Activated CD8-positive, alpha-beta memory T cell treated with anti-CD3 and anti-CD28 coated beads, Interleukin-2, amount 10 ng/mL, durations not matched to agents 7 days and 5 days (primary cell): ENCODE measurements at regions of chr6 and their contacts with region 1.

Region 1: DNA sequence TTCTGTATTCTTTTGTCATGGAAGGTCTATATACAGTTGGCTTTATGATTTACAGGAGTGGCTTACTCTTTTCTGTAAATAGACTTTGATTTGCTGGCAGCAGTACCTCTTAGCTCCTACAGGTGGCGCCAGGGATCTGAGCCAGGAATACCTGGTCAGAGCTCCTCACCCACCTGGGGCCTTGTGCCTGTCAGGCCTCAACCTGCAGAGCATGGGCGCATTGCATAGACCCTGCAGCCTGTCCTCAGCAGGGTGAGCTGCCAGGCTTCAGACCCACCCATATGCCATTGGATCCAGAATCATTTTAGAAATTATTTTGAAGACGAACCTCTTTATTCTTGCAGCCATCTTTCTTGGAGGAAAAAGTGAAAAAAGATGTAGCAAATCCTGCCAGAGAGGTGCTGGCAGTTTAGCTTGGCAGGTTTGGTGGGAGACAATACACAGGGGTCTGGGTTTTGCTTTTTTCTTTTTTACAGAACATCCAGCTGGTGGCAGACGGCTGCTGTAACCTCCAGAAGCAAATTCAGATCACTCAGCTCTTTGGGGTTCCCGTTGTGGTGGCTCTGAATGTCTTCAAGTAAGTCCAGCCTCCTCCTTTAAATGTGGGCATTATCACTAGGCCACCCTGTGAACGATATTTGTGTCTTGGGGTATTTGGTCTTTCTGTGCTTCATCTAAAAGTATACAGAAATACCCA is 149.1 kb downstream of the MTHFD1L start:
- DNase-seq: peak; percentile 72
- ATAC-seq: peak; percentile 69
- H3K4me3 Mint-ChIP-seq: no peak overlapping the region
- H3K27ac Mint-ChIP-seq: no peak overlapping the region
- H3K4me1 Mint-ChIP-seq: peaks cover 6% of the 10 kb centered on the region
- H3K27me3 Mint-ChIP-seq: no peaks in the 10 kb centered on the region

Region 2: GRCh38 chr6:150891888-150892485 is 122.6 kb before region 1 on chr6:
- CTCF ChIA-PET with region 1: interaction called, 10 read pairs
- DNase-seq: peak; percentile 76
- ATAC-seq: peak; percentile 57
- H3K4me3 Mint-ChIP-seq: no peak overlapping the region
- H3K27ac Mint-ChIP-seq: no peak overlapping the region
- H3K4me1 Mint-ChIP-seq: peaks cover 48% of the 10 kb centered on the region
- H3K27me3 Mint-ChIP-seq: no peaks in the 10 kb centered on the region

Region 3: GRCh38 chr6:151004415-151005024 is 10.0 kb before region 1 on chr6:
- CTCF ChIA-PET with region 1: interaction called, 35 read pairs
- DNase-seq: no peak
- ATAC-seq: peak; percentile 83
- H3K4me3 Mint-ChIP-seq: no peak overlapping the region
- H3K27ac Mint-ChIP-seq: peak overlapping the region; percentile 56
- H3K4me1 Mint-ChIP-seq: peaks cover 19% of the 10 kb centered on the region
- H3K27me3 Mint-ChIP-seq: no peaks in the 10 kb centered on the region

Region 4: GRCh38 chr6:151130329-151130728 is 115.8 kb after region 1 on chr6:
- CTCF ChIA-PET with region 1: no interaction called
- DNase-seq: peak; percentile 46
- ATAC-seq: no peak
- H3K4me3 Mint-ChIP-seq: no peak overlapping the region
- H3K27ac Mint-ChIP-seq: no peak overlapping the region
- H3K4me1 Mint-ChIP-seq: peaks cover 4% of the 10 kb centered on the region
- H3K27me3 Mint-ChIP-seq: peaks cover 3% of the 10 kb centered on the region

Region 5: DNA sequence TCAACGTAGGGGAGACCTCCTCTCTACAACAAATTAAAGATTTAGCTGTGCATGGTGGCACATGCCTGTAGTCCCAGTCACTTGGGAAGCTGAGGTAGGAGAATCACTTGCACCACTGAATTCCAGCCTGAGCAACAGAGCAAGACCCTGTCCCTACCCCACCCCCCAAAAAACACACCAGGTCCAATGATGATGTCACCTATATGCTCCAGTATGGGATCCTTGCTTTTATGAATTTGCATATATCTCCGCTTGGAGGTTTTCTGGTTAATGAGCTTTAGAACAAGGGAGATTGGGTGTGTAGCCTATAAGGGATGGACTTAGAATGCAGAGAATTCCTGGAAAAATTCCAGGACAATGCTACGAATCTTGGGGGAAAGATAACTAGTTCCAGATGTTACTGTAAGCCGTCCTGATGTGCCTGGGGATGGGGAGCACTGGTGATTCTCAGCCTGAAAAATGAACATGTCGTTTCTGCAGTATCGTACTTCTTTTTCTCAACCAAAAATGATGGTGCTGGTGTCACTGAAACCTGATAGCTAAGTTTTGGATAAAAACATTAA is 315.7 kb after region 1 on chr6:
- CTCF ChIA-PET with region 1: interaction called, 179 read pairs
- DNase-seq: no peak
- ATAC-seq: no peak
- H3K4me3 Mint-ChIP-seq: no peak overlapping the region
- H3K27ac Mint-ChIP-seq: no peak overlapping the region
- H3K4me1 Mint-ChIP-seq: peaks cover 11% of the 10 kb centered on the region
- H3K27me3 Mint-ChIP-seq: peaks cover 62% of the 10 kb centered on the region

Region 6: DNA sequence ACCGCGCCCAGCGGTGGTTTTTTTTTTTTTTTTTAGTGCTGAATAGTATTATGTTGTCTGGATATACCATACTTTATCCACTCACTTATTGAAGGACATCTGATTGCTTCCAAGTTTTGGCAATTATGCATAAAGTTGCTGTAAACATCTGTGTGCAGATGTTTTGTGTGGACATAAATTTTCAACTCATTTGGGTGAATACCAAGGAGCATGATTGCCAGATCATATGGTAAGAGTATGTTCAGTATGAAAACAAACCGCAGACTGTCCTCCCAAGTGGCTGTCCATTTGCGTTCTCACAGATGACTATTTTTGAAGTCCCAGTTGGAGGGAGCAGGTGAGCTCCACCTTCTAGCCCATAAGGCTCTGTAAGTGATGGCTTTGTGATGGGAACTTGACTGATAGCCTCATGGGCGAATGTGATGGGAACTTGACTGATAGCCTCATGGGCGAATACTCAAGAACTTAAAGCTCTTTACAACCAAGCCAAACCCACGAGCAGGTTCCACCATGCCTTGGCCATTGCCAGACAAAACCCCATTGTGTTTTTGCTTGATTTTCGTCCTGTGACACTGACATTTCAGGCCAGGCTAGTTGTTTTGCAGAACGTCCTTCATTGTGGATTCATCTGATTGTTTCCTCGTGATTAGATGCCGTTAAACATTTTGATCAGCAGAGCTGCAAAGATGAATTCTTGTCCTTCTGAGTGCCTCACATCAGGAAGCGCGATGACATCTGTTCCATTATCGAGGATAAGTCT is 325.8 kb after region 1 on chr6:
- CTCF ChIA-PET with region 1: interaction called, 30 read pairs
- DNase-seq: no peak
- ATAC-seq: no peak
- H3K4me3 Mint-ChIP-seq: no peak overlapping the region
- H3K27ac Mint-ChIP-seq: no peak overlapping the region
- H3K4me1 Mint-ChIP-seq: no peaks in the 10 kb centered on the region
- H3K27me3 Mint-ChIP-seq: peaks cover 12% of the 10 kb centered on the region